GM10248 (cell line): ENCODE measurements at regions of chr4 and their contacts with region 1.

Region 1: GRCh38 chr4:10640561-10641201 is 43.9 kb downstream of the CLNK start:
- DNase-seq: no peak
- CTCF ChIP-seq: no peak

Region 2: GRCh38 chr4:10530137-10530786 is 110.4 kb before region 1 on chr4:
- CTCF ChIA-PET with region 1: no interaction called
- POLR2A ChIA-PET with region 1: no interaction called
- DNase-seq: no peak
- CTCF ChIP-seq: no peak

Region 3: GRCh38 chr4:10622728-10623127 is 18.0 kb before region 1 on chr4:
- CTCF ChIA-PET with region 1: interaction called, 12 read pairs
- POLR2A ChIA-PET with region 1: no interaction called
- DNase-seq: peak; percentile 45
- CTCF ChIP-seq: peak; percentile 57